PC-9 (cell line): ENCODE measurements at regions of chr3 and their contacts with region 1.

Region 1: DNA sequence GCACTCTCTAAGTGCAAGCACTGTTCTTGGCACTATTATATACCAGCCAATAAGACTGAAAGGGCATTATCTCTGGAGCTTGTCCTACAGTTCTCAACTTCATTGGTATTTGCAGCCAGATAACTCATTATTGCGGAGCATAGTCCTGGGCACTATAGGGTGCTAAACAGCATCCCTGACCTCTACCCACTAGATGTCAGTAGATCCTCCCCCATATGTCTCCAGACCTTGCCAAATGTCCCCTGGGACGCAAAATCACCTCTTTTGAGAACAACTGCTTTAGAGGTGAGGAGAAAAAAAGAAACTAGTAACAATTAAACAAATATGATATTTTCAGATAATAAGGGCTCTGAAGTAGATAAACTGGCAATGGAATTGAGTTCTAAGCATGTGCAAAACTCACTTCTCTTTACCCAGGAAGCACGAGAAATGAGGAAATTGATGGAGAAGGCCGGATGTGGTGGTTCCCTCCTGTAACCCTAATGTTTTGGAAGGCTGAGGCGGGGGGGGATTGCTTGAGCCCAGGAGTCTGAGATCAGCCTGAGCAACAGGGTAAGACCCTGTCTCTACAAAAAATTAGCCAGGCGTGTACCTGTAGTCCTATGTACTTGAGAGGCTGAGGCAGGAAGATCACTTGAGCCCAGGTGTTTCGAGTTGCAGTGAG is 61.4 kb downstream of the FRMD4B start:
- DNase-seq: no peak
- H3K4me3 ChIP-seq: no peak overlapping the region
- H3K27ac ChIP-seq: no peak overlapping the region
- H3K4me1 ChIP-seq: no peaks in the 10 kb centered on the region
- H3K27me3 ChIP-seq: no peaks in the 10 kb centered on the region
- CTCF ChIP-seq: peak; percentile 33; the same call in 1 of the 2 replicates

Region 2: GRCh38 chr3:69410250-69410649 is 85.8 kb after region 1 on chr3:
- CTCF ChIA-PET with region 1: no interaction called
- POLR2A ChIA-PET with region 1: no interaction called
- intact Hi-C with region 1: loop called (anchors 2 kb)
- DNase-seq: peak in 1 of 2 experiments; percentile 50
- H3K4me3 ChIP-seq: no peak overlapping the region
- H3K27ac ChIP-seq: no peak overlapping the region
- H3K4me1 ChIP-seq: no peaks in the 10 kb centered on the region
- H3K27me3 ChIP-seq: no peaks in the 10 kb centered on the region
- CTCF ChIP-seq: peak; percentile 68